ENCODE measurements at regions of chr10 and their contacts with region 1.

Region 1: GRCh38 chr10:47311932-47312662 is 10.2 kb upstream of the GDF2 start:
- DNase-seq: peak; percentile 94
- H3K4me3 Mint-ChIP-seq: peak overlapping the region; percentile 39
- H3K27ac Mint-ChIP-seq: peak overlapping the region; percentile 48
- H3K4me1 Mint-ChIP-seq: peaks cover 13% of the 10 kb centered on the region
- H3K27me3 Mint-ChIP-seq: peaks cover under 1% of the 10 kb centered on the region

Region 2: GRCh38 chr10:47024399-47025252 is 287.5 kb before region 1 on chr10:
- intact Hi-C with region 1: loop called (anchors 1 kb)
- DNase-seq: peak; percentile 89
- H3K4me3 Mint-ChIP-seq: no peak overlapping the region
- H3K27ac Mint-ChIP-seq: no peak overlapping the region
- H3K4me1 Mint-ChIP-seq: no peaks in the 10 kb centered on the region
- H3K27me3 Mint-ChIP-seq: no peaks in the 10 kb centered on the region

Region 3: DNA sequence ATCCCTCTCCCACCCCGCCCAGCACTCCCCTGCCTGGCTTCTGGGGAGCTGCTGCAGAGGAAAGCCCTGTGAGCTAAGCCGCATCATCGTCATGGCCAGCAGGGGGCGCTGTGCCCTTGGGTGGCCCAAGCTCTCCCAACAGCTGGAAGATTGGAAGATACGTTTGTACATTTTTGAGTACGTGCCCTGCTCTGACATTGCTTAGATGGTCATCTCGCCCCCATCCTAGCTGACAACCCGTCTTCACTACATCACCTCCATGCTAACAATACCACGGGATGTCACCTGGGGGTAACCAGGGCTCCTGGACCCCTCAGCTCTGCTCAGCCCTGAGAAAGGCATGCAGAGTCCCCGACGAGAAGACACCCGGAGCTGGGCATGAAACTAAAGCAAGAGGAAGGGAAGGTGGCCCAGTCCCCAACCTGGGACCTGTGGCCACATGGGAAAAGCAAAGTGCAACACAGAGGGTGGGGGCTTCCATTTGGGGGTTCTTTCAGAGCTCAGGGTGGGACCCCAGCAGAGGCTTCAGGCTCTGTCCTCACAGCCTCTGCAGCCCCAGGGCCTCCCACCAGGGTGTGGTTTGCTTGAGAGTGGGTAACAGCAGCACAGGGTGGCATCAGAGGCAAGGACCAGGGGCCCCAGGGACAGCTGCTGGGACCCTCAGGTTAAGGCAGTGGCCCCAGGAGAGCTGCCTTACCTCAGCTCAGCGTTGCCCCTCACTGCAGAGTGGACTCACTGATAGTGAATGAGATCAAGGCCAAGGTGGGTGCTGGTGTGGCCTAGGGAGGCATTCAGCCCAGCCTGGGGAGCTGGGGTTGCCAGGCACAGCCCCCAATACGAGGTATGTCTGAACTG is 264.2 kb before region 1 on chr10:
- intact Hi-C with region 1: loop called (anchors 1 kb)
- DNase-seq: peak; percentile 92
- H3K4me3 Mint-ChIP-seq: no peak overlapping the region
- H3K27ac Mint-ChIP-seq: peak overlapping the region; percentile 18
- H3K4me1 Mint-ChIP-seq: peaks cover 6% of the 10 kb centered on the region
- H3K27me3 Mint-ChIP-seq: no peaks in the 10 kb centered on the region

Region 4: GRCh38 chr10:47181052-47181849 is 130.8 kb before region 1 on chr10:
- intact Hi-C with region 1: loop called (anchors 5 kb)
- DNase-seq: peak; percentile 64
- H3K4me3 Mint-ChIP-seq: no peak overlapping the region
- H3K27ac Mint-ChIP-seq: no peak overlapping the region
- H3K4me1 Mint-ChIP-seq: no peaks in the 10 kb centered on the region
- H3K27me3 Mint-ChIP-seq: no peaks in the 10 kb centered on the region

Region 5: GRCh38 chr10:47269294-47269693 is 42.8 kb before region 1 on chr10:
- intact Hi-C with region 1: no loop called
- DNase-seq: no peak
- H3K4me3 Mint-ChIP-seq: no peak overlapping the region
- H3K27ac Mint-ChIP-seq: no peak overlapping the region
- H3K4me1 Mint-ChIP-seq: peaks cover 16% of the 10 kb centered on the region
- H3K27me3 Mint-ChIP-seq: peaks cover 4% of the 10 kb centered on the region